G401 (cell line): ENCODE measurements at regions of chr16 and their contacts with region 1.

Region 1: DNA sequence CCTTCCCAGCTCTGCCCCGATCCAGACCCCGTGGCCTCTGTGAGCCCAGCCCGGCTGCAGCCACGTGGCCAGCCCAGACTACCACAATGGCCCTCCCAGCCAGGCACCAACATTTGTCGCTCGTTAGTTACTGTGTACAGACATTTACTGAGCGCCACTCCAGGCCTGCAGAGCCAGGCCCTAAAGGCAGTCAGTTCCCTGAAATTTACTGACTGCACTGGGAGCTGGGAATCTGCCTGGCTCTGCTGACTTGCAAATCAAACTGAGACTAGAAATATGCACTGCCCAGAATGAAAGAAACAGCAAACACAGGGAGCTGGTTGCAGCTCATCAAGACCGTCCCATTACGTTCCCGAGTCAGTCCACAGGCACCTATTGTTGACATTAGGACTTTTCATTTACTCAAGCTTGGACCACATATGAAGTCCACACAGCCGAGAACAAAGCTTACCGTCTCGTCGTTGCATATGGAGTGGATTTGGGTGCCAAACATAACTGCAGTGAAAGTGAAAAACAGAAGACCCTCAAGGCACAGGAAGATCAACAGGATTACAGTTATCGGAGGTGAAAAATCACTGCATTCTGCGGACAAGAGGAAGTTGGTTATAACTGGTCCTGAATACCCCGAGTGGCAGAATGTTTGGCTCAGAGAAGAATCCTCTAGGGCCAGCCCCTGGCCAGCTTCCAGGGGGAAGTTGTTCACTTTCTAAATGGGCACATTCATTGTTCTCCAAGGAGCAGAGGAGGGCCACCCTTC is 34.5 kb downstream of the ZDHHC7 start:
- DNase-seq: no peak

Region 2: GRCh38 chr16:84925092-84925772 is 51.6 kb before region 1 on chr16:
- in situ Hi-C with region 1: loop called (anchors 5 kb)
- DNase-seq: no peak

Region 3: GRCh38 chr16:85090873-85091521 is 114.2 kb after region 1 on chr16:
- in situ Hi-C with region 1: no loop called
- DNase-seq: no peak